Naive thymus-derived CD4-positive, alpha-beta T cell (primary cell): ENCODE measurements at regions of chr4 and their contacts with region 1.

Region 1: GRCh38 chr4:57426779-57427395 is 316.7 kb upstream of the IGFBP7 start:
- DNase-seq: peak in 1 of 9 donors; percentile 25
- ATAC-seq: peak; percentile 51
- H3K4me3 ChIP-seq: no peak overlapping the region
- H3K4me3 Mint-ChIP-seq: no peak overlapping the region
- H3K27ac ChIP-seq: no peak overlapping the region
- H3K27ac Mint-ChIP-seq: no peak overlapping the region
- H3K4me1 ChIP-seq: no peaks in the 10 kb centered on the region
- H3K4me1 Mint-ChIP-seq: no peaks in the 10 kb centered on the region
- H3K27me3 ChIP-seq: no peaks in the 10 kb centered on the region
- H3K27me3 Mint-ChIP-seq: peaks cover 0 to 13% (median 7%) of the 10 kb centered on the region in 5 donors

Region 2: GRCh38 chr4:57163530-57164459 is 263.1 kb before region 1 on chr4:
- CTCF ChIA-PET with region 1: no interaction called
- POLR2A ChIA-PET with region 1: no interaction called
- intact Hi-C with region 1: loop called in 1 of 2 experiments (anchors 10 kb)
- DNase-seq: peak; percentile 25 to 80 (median 63)
- ATAC-seq: peak; percentile 93
- H3K4me3 ChIP-seq: peak overlapping the region; percentile 88
- H3K4me3 Mint-ChIP-seq: peak overlapping the region; percentile 83 to 91 (median 90)
- H3K27ac ChIP-seq: no peak overlapping the region
- H3K27ac Mint-ChIP-seq: peak overlapping the region in 3 of 9 donors; percentile 55 to 60 (median 58)
- H3K4me1 ChIP-seq: no peaks in the 10 kb centered on the region
- H3K4me1 Mint-ChIP-seq: peaks cover 0 to 14% (median 8%) of the 10 kb centered on the region in 7 donors
- H3K27me3 ChIP-seq: no peaks in the 10 kb centered on the region
- H3K27me3 Mint-ChIP-seq: peaks cover 21 to 37% (median 30%) of the 10 kb centered on the region in 5 donors